Pancreas (tissue), 10 donors: ENCODE measurements at regions of chr2 and their contacts with region 1.

Region 1: GRCh38 chr2:231925303-231926179 is 655 bp downstream of the NPPC start:
- DNase-seq: peak; percentile 66 to 96 (median 83)
- ATAC-seq: peak; percentile 94 to 96 (median 96)
- H3K4me3 ChIP-seq: peak overlapping the region; percentile 2 to 56 (median 28)
- H3K27ac ChIP-seq: no peak overlapping the region
- H3K4me1 ChIP-seq: peaks cover 7 to 17% (median 10%) of the 10 kb centered on the region in 3 donors
- H3K27me3 ChIP-seq: peaks cover 0 to 18% (median 3%) of the 10 kb centered on the region in 4 donors
- CTCF ChIP-seq: peak; percentile 89 to 96 (median 95)

Region 2: DNA sequence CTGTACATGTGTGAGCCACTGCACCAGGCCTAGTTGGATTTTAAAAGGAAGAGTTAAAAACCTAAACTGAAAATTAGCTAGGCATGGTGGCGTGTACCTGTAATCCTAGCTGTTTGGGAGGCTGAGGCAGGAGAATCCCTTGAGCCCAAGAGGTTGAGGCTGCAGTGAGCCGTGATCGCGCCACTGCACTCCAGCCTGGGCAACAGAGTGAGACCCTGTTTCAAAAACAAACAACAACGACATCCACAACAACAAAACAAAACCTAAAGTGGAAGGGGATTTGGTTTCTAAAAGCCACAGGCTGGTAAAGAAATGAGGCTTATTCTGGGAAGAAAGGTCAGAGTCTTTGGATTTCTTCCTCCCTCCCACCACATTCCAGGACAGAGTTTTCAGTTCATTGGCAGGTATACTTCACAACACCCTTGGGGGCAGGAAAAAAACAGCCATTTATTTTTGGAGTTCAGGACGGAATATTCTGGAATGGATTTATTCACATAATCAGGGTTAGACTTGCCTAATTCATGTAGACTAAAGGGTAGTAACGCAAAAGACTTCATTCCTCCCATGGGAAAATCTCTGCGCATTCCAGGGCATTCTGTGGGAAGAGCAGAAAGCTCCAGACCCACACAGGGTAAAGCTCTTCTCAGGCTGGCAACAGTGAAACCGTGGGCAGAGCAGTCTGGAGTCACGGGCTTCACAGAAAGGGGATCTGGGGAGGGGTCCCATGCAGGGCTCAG is 298.0 kb before region 1 on chr2:
- intact Hi-C with region 1: no loop called
- DNase-seq: no peak
- ATAC-seq: peak in 1 of 4 donors; percentile 29
- H3K4me3 ChIP-seq: no peak overlapping the region
- H3K27ac ChIP-seq: peak overlapping the region in 1 of 4 donors; percentile 17
- H3K4me1 ChIP-seq: no peaks in the 10 kb centered on the region
- H3K27me3 ChIP-seq: no peaks in the 10 kb centered on the region
- CTCF ChIP-seq: no peak

Region 3: DNA sequence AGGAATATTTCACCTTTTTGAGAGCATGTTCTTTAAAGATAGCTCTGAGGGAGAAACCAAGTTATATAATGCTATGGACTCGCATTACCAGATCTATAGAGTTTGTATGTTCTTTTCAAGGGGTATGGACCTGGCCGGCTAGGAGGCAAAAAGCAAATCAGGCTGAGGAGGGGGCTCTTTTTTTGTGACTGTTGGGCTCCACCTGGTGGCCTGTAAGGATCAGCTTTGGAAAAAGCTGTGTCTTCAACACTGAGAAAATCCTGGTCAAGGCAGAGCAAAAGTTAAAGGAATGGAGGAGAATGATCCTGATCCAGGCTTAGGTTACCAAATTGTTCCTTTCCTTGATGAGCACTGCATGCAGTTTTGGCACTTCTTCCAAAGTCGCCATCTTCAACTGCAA is 216.5 kb after region 1 on chr2:
- intact Hi-C with region 1: loop called in 2 of 3 experiments (anchors 5 to 10 kb)
- DNase-seq: peak in 2 of 6 donors; percentile 4 to 21
- ATAC-seq: peak; percentile 63 to 77 (median 72)
- H3K4me3 ChIP-seq: no peak overlapping the region
- H3K27ac ChIP-seq: no peak overlapping the region
- H3K4me1 ChIP-seq: peaks cover 0 to 6% (median 6%) of the 10 kb centered on the region in 3 donors
- H3K27me3 ChIP-seq: no peaks in the 10 kb centered on the region
- CTCF ChIP-seq: peak in 3 of 4 donors; percentile 21 to 40 (median 28)

Region 4: DNA sequence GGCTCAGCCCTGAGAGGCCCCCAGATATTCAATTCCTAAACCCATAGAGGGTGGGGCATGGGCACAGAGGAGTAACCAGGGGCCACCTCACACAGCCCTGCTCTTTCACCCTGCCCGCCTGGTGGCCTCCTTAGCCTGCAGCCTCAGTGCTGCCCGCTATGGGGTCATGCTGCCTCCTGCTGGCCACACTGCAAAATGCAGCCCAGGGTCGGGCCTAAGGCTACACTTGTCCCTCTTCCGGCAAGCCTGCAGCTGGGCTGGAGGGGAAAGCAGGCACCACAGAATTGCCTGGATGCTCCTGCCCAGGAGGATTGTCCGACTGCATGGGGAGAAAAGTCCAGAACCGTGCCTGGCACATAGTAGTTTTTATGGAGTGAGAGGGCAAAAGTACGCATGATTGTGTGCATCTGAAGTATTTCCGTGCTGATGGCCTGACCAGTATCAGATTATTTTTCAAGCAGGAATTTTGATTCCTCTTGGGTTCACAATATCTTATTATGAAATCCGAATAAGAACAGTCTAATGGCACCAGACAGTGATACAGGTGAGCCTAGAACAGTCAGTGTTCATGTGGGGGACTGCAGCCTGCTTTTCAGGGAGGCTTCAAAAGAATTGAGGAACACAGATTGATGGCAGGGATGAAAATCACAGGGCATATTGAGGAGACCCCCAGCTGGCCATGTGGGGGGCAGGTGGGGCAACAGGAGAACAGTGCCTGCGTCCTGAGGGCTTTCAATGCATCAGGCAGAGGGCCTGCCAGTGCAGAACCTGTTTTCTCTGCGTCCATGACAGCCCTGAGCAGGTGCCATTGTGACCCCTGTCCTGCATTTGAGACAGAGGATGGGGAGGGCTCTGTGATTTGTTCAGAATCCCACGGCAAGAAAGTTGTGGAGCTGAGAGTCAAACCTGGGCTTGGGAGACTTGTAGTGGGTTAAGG is 401.8 kb after region 1 on chr2:
- intact Hi-C with region 1: loop called in 1 of 3 experiments (anchors 5 kb)
- DNase-seq: peak; percentile 29 to 91 (median 74)
- ATAC-seq: peak; percentile 79 to 85 (median 82)
- H3K4me3 ChIP-seq: no peak overlapping the region
- H3K27ac ChIP-seq: no peak overlapping the region
- H3K4me1 ChIP-seq: no peaks in the 10 kb centered on the region
- H3K27me3 ChIP-seq: no peaks in the 10 kb centered on the region
- CTCF ChIP-seq: peak; percentile 49 to 68 (median 64)